ENCODE measurements at regions of chr9 and their contacts with region 1.

Region 1: GRCh38 chr9:6944896-6945295 is 187.1 kb downstream of the KDM4C start:
- DNase-seq: peak; percentile 56
- H3K4me3 ChIP-seq: no peak overlapping the region
- H3K27ac ChIP-seq: no peak overlapping the region
- H3K4me1 ChIP-seq: peaks cover 17% of the 10 kb centered on the region
- H3K27me3 ChIP-seq: no peaks in the 10 kb centered on the region
- CTCF ChIP-seq: no peak

Region 2: GRCh38 chr9:6855860-6856259 is 89.0 kb before region 1 on chr9:
- CTCF ChIA-PET with region 1: no interaction called
- dilution Hi-C with region 1: loop called (anchors 5 kb)
- in situ Hi-C with region 1: no loop called
- intact Hi-C with region 1: no loop called
- DNase-seq: no peak
- H3K4me3 ChIP-seq: no peak overlapping the region
- H3K27ac ChIP-seq: no peak overlapping the region
- H3K4me1 ChIP-seq: peaks cover 8% of the 10 kb centered on the region
- H3K27me3 ChIP-seq: no peaks in the 10 kb centered on the region
- CTCF ChIP-seq: no peak